ENCODE measurements at regions of chr1 and their contacts with region 1.

Region 1: GRCh38 chr1:92831762-92832536 is at the start of gene RPL5:
- DNase-seq: peak; percentile 98
- H3K4me3 Mint-ChIP-seq: peak within 1 kb of the TSS; percentile 95
- H3K27ac Mint-ChIP-seq: peak within 1 kb of the TSS; percentile 100
- H3K4me1 Mint-ChIP-seq: peaks cover 28% of the 10 kb centered on the region
- H3K27me3 Mint-ChIP-seq: no peaks in the 10 kb centered on the region
- CTCF ChIP-seq: peak; percentile 78
- total RNA-seq, gene RPL5: 1,285 and 1,607 TPM in 2 replicates

Region 2: DNA sequence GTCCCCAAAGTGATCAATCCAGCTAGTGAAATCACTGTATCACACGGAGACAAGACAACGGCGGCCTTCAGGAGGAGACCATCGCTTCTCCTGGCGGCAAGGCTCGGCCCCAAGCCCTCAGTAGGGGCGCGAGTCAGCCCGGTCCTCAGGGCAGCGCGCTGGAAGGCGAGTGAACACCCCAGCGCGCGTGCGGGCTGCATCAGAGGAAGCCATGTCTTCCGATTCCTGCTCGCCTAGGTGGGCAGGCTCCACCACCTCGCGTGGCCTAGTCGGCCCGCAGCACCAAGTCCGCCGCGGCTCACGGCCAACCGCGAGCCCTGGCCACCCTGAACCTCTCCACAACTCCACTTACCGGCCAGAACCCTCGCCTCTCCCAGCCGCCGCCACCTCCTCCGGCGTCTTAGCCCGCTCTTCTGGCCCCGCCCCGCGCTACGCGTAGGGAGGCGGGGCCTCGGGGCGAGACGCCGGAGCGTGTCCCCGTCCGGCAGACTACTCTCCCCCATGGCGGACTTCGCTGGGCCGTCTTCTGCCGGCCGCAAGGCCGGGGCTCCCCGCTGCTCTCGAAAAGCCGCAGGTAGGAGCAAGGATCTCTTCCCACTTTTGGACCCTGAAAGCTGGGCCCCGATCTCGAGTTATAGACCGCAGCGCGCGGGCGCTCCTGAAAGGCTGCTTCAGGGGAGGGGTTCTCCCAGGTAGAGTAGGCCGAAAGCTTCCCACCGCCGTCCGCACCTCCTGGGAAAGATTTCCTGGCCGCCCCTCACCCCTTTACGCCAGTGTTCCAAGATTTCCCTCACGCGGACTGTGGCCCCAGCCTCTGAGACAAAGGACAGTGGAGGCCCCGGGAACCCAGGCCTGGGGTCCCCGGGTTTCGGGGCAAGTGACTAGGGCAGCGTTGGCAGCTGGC is 533.1 kb before region 1 on chr1 and contains the starts of genes GLMN and RPAP2:
- CTCF ChIA-PET with region 1: no interaction called
- POLR2A ChIA-PET with region 1: no interaction called
- intact Hi-C with region 1: loop called (anchors 10 kb)
- DNase-seq: peak; percentile 89
- H3K4me3 Mint-ChIP-seq: peak within 1 kb of the TSS; percentile 97
- H3K27ac Mint-ChIP-seq: peak within 1 kb of the TSS; percentile 96
- H3K4me1 Mint-ChIP-seq: peaks cover 10% of the 10 kb centered on the region
- H3K27me3 Mint-ChIP-seq: no peaks in the 10 kb centered on the region
- CTCF ChIP-seq: peak; percentile 3
- total RNA-seq, gene GLMN: 8.6 and 10.1 TPM in 2 replicates
- total RNA-seq, gene RPAP2: 26.2 and 29.3 TPM in 2 replicates

Region 3: DNA sequence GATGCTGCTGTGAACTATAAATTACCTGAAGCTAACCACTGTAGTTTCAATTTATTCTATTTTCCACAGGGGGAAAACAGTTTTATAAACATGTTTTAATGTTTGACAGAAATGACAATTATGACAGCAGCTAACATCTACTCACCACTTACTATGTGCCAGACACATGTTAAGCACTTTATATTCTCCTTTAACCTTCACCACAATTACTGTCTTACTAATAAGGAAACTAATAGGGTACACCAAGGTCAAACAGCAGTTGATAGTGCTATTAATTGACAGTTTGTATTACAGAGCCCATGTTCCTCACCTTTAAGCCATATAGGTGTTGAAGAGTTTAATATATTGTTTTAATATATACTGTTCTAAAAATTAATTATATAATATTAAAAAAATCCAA is 193.5 kb before region 1 on chr1:
- CTCF ChIA-PET with region 1: no interaction called
- POLR2A ChIA-PET with region 1: no interaction called
- intact Hi-C with region 1: no loop called
- DNase-seq: no peak
- H3K4me3 Mint-ChIP-seq: no peak overlapping the region
- H3K27ac Mint-ChIP-seq: no peak overlapping the region
- H3K4me1 Mint-ChIP-seq: no peaks in the 10 kb centered on the region
- H3K27me3 Mint-ChIP-seq: no peaks in the 10 kb centered on the region
- CTCF ChIP-seq: no peak

Region 4: DNA sequence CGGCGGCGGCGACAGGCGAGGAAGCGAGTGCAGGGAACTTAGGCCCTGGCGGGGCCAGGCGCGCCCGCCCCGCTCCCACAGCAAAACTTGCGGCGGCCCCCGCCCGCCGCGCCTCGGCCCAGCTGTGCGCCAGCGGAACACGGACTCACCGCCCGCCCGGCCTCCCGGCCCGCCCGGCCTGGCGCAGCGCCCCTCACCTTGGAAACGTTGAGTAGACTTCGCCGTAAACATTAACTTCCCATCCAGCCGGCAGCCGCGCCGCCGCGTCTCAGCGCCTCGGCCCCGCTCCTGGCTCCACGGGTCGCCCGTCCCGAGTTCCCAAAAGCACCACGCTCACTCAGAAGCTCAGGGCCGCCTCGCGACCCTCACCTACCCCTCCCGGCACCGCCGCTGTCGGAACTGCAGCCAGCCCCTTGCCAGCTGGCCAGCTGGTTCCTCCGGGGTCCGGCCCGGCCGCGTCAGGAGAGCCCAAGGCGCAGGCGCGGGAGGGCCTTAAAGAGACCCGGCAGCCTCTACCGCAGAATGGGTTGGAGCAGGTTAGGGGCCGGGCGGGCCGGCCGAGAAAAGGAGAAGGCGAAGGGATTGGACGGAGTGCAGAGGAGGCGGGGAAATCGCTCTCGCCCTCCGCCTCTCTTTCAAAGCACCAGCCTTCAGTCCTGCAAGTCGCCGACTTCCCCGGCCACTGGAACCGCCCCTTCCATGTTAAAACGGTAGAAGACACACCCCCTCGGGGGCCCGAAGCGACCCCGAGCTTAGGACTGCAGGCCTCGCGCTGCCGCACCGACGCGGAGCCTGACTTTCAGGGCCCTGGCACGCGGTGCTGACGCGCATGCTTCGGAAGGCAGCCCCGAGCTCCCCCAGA is 47.1 kb before region 1 on chr1 and contains the start of gene EVI5:
- CTCF ChIA-PET with region 1: interaction called, 4 read pairs
- POLR2A ChIA-PET with region 1: interaction called, 45 read pairs
- intact Hi-C with region 1: no loop called
- DNase-seq: peak; percentile 96
- H3K4me3 Mint-ChIP-seq: peak within 1 kb of the TSS; percentile 87
- H3K27ac Mint-ChIP-seq: peak within 1 kb of the TSS; percentile 96
- H3K4me1 Mint-ChIP-seq: peaks cover 10% of the 10 kb centered on the region
- H3K27me3 Mint-ChIP-seq: no peaks in the 10 kb centered on the region
- CTCF ChIP-seq: no peak
- total RNA-seq, gene EVI5: 23.2 and 25.0 TPM in 2 replicates

Region 5: DNA sequence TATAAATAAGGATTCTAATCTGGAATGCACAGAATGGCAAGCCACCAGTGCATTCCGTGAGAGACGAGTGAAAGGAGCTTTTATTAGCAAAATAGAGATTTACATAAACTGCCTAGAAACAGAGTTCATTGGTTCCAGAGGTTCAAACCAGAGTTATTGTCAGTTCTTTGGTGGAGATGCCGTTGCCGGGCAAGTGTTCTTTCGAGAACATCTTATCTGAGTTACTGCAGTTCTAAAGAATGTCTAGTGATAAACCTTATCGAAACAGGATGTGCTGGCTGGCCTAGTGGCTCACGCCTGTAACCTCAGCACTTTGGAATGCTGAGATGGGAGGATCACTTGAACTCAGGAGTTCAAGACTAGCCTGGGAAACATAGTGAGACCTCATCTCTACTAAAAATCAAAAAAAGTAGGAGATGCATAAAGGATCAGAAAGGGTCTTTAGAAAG is 27.2 kb before region 1 on chr1:
- CTCF ChIA-PET with region 1: interaction called, 3 read pairs
- POLR2A ChIA-PET with region 1: interaction called, 10 read pairs
- intact Hi-C with region 1: no loop called
- DNase-seq: peak; percentile 77
- H3K4me3 Mint-ChIP-seq: no peak overlapping the region
- H3K27ac Mint-ChIP-seq: no peak overlapping the region
- H3K4me1 Mint-ChIP-seq: peaks cover 18% of the 10 kb centered on the region
- H3K27me3 Mint-ChIP-seq: no peaks in the 10 kb centered on the region
- CTCF ChIP-seq: no peak

Region 6: GRCh38 chr1:92843429-92844352 is 11.7 kb after region 1 on chr1:
- CTCF ChIA-PET with region 1: interaction called, 5 read pairs
- POLR2A ChIA-PET with region 1: interaction called, 23 read pairs
- intact Hi-C with region 1: no loop called
- DNase-seq: no peak
- H3K4me3 Mint-ChIP-seq: no peak overlapping the region
- H3K27ac Mint-ChIP-seq: no peak overlapping the region
- H3K4me1 Mint-ChIP-seq: peaks cover 7% of the 10 kb centered on the region
- H3K27me3 Mint-ChIP-seq: no peaks in the 10 kb centered on the region
- CTCF ChIP-seq: no peak

Region 7: GRCh38 chr1:92960395-92961130 is 128.6 kb after region 1 on chr1:
- CTCF ChIA-PET with region 1: interaction called, 4 read pairs
- POLR2A ChIA-PET with region 1: interaction called, 18 read pairs
- intact Hi-C with region 1: no loop called
- DNase-seq: peak; percentile 82
- H3K4me3 Mint-ChIP-seq: peak overlapping the region; percentile 85
- H3K27ac Mint-ChIP-seq: peak overlapping the region; percentile 78
- H3K4me1 Mint-ChIP-seq: peaks cover 4% of the 10 kb centered on the region
- H3K27me3 Mint-ChIP-seq: no peaks in the 10 kb centered on the region
- CTCF ChIP-seq: peak; percentile 35

Region 8: DNA sequence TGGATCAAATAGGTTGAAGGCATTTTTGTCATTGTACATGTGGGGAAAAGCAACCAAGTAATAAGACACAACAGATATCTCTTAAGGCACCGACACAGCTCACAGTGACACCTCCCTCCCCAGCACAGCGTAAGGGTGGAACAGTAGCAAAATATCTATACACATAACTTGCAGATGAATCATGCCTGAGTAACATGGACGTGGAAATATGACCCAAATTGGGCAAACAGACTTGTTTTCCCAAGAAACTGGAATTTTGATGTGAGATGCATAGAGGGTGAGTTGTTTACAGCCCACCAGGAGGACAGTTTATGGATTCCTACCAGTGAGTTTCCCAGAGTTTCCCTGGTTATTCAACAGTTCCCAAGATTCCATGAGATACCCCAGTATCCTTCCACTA is 506.5 kb after region 1 on chr1:
- CTCF ChIA-PET with region 1: no interaction called
- POLR2A ChIA-PET with region 1: no interaction called
- intact Hi-C with region 1: no loop called
- DNase-seq: peak; percentile 85
- H3K4me3 Mint-ChIP-seq: peak overlapping the region; percentile 28
- H3K27ac Mint-ChIP-seq: peak overlapping the region; percentile 87
- H3K4me1 Mint-ChIP-seq: peaks cover 22% of the 10 kb centered on the region
- H3K27me3 Mint-ChIP-seq: no peaks in the 10 kb centered on the region
- CTCF ChIP-seq: no peak

Measured in MCF 10A (cell line).